IMR-90 (cell line): ENCODE measurements at regions of chr5 and their contacts with region 1.

Region 1: DNA sequence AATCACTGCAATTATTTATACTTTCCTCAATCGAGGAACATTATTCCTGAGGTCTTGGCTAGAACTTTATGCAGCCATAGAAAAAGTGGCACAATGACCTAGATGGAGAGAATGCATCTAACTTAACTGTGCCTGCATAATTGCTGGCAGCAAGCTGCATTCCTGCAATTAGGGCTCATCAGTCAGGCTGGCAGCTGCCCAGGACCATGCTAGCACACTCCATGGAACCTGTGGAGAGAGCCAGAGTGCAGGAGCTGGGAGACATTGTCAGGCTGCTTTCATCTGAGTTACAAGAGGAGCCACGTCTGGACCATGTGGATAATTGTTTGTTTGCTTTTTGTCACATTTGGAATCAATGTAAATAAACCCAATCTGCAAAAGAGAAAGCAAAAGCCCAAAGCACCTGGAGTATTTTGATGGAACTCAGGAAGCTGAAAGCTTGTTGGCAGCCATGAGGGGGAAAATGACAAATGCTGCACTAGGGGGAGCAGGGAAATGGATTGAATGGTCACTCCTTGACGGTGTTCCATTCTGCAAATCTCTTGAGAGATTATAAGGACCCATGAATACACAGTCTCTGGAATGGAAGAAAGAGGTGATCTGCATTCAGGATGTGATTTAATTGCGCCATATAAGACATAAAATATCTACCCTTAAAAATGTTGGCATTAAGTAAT is 839.9 kb downstream of the MAT2B start:
- DNase-seq: peak; percentile 50
- ATAC-seq: peak; percentile 56
- H3K4me3 ChIP-seq: no peak overlapping the region
- H3K27ac ChIP-seq: no peak overlapping the region
- H3K4me1 ChIP-seq: peaks cover 2% of the 10 kb centered on the region
- H3K27me3 ChIP-seq: no peaks in the 10 kb centered on the region
- CTCF ChIP-seq: no peak
- POLR2A ChIP-seq: no peak
- RAD21 ChIP-seq: no peak

Region 2: GRCh38 chr5:164326219-164326618 is 19.1 kb before region 1 on chr5:
- CTCF ChIA-PET with region 1: interaction called, 3 read pairs
- POLR2A ChIA-PET with region 1: no interaction called
- dilution Hi-C with region 1: no loop called
- in situ Hi-C with region 1: no loop called
- intact Hi-C with region 1: loop called (anchors 1 kb)
- DNase-seq: no peak
- ATAC-seq: no peak
- H3K4me3 ChIP-seq: no peak overlapping the region
- H3K27ac ChIP-seq: no peak overlapping the region
- H3K4me1 ChIP-seq: no peaks in the 10 kb centered on the region
- H3K27me3 ChIP-seq: no peaks in the 10 kb centered on the region
- CTCF ChIP-seq: no peak
- POLR2A ChIP-seq: no peak
- RAD21 ChIP-seq: no peak

Region 3: DNA sequence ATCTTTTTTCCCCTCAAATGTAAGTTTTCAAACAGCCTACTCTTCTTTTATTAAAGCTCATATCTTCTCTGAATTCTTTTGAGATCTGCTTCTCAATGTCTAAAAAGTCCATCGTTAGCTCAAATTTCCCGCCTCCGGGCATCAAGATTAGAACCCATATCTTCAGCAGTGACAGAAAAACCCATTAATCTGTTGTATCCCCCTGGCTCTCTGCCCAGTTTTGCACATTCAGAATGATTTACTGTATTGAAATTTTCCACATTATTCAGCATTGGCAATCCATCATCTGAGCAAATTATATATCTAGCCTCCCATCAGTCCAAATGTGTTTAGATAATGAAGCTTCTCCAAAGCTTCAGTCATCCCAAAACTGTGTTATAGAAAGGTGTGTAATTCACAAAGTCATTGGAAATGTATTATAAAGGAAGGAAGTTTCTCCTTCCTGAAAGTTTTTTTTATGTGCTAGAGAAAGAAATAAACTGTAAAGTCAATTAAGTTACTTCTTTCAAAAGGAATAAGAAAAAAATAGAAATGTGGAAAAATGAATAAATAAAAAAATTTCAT is 10.0 kb after region 1 on chr5:
- CTCF ChIA-PET with region 1: no interaction called
- POLR2A ChIA-PET with region 1: no interaction called
- dilution Hi-C with region 1: no loop called
- in situ Hi-C with region 1: no loop called
- intact Hi-C with region 1: no loop called
- DNase-seq: no peak
- ATAC-seq: no peak
- H3K4me3 ChIP-seq: no peak overlapping the region
- H3K27ac ChIP-seq: no peak overlapping the region
- H3K4me1 ChIP-seq: peaks cover 6% of the 10 kb centered on the region
- H3K27me3 ChIP-seq: no peaks in the 10 kb centered on the region
- CTCF ChIP-seq: no peak
- POLR2A ChIP-seq: no peak
- RAD21 ChIP-seq: no peak